ENCODE measurements at regions of chr16 and their contacts with region 1.

Region 1: GRCh38 chr16:19595043-19595767 is 39.7 kb downstream of the VPS35L start:
- DNase-seq: peak; percentile 83
- ATAC-seq: peak; percentile 90
- H3K4me3 ChIP-seq: no peak overlapping the region
- H3K27ac ChIP-seq: no peak overlapping the region
- H3K4me1 ChIP-seq: peaks cover 9% of the 10 kb centered on the region
- H3K27me3 ChIP-seq: no peaks in the 10 kb centered on the region
- CTCF ChIP-seq: no peak
- POLR2A ChIP-seq: no peak
- RAD21 ChIP-seq: no peak

Region 2: GRCh38 chr16:18839555-18839954 is 755.6 kb before region 1 on chr16:
- CTCF ChIA-PET with region 1: no interaction called
- POLR2A ChIA-PET with region 1: no interaction called
- dilution Hi-C with region 1: no loop called
- in situ Hi-C with region 1: no loop called
- intact Hi-C with region 1: no loop called
- DNase-seq: no peak
- ATAC-seq: no peak
- H3K4me3 ChIP-seq: no peak overlapping the region
- H3K27ac ChIP-seq: no peak overlapping the region
- H3K4me1 ChIP-seq: no peaks in the 10 kb centered on the region
- H3K27me3 ChIP-seq: no peaks in the 10 kb centered on the region
- CTCF ChIP-seq: no peak
- POLR2A ChIP-seq: no peak
- RAD21 ChIP-seq: no peak

Region 3: GRCh38 chr16:19583665-19584300 is 11.4 kb before region 1 on chr16:
- CTCF ChIA-PET with region 1: interaction called, 12 read pairs
- POLR2A ChIA-PET with region 1: no interaction called
- dilution Hi-C with region 1: no loop called
- in situ Hi-C with region 1: no loop called
- intact Hi-C with region 1: no loop called
- DNase-seq: peak; percentile 55
- ATAC-seq: peak; percentile 91
- H3K4me3 ChIP-seq: no peak overlapping the region
- H3K27ac ChIP-seq: no peak overlapping the region
- H3K4me1 ChIP-seq: no peaks in the 10 kb centered on the region
- H3K27me3 ChIP-seq: no peaks in the 10 kb centered on the region
- CTCF ChIP-seq: peak; percentile 68
- POLR2A ChIP-seq: no peak
- RAD21 ChIP-seq: peak; percentile 54

Measured in IMR-90 (cell line).